IMR-90 (cell line): ENCODE measurements at regions of chr2 and their contacts with region 1.

Region 1: GRCh38 chr2:134027980-134028379 is 225.9 kb upstream of the MGAT5 start:
- DNase-seq: no peak
- ATAC-seq: no peak
- H3K4me3 ChIP-seq: no peak overlapping the region
- H3K27ac ChIP-seq: no peak overlapping the region
- H3K4me1 ChIP-seq: peaks cover 3% of the 10 kb centered on the region; the same call in 1 of the 2 replicates
- H3K27me3 ChIP-seq: peaks cover 9% of the 10 kb centered on the region
- CTCF ChIP-seq: no peak
- POLR2A ChIP-seq: no peak
- RAD21 ChIP-seq: no peak

Region 2: GRCh38 chr2:134098321-134098720 is 70.3 kb after region 1 on chr2:
- CTCF ChIA-PET with region 1: no interaction called
- POLR2A ChIA-PET with region 1: no interaction called
- dilution Hi-C with region 1: no loop called
- in situ Hi-C with region 1: no loop called
- intact Hi-C with region 1: loop called (anchors 5 kb)
- DNase-seq: no peak
- ATAC-seq: no peak; the same call in 1 of the 2 replicates
- H3K4me3 ChIP-seq: no peak overlapping the region
- H3K27ac ChIP-seq: no peak overlapping the region
- H3K4me1 ChIP-seq: no peaks in the 10 kb centered on the region; the same call in 1 of the 2 replicates
- H3K27me3 ChIP-seq: no peaks in the 10 kb centered on the region
- CTCF ChIP-seq: no peak
- POLR2A ChIP-seq: no peak
- RAD21 ChIP-seq: no peak

Region 3: GRCh38 chr2:134118279-134119116 is 90.5 kb after region 1 on chr2:
- CTCF ChIA-PET with region 1: no interaction called
- POLR2A ChIA-PET with region 1: no interaction called
- dilution Hi-C with region 1: no loop called
- in situ Hi-C with region 1: no loop called
- intact Hi-C with region 1: no loop called
- DNase-seq: peak; percentile 98
- ATAC-seq: peak; percentile 48
- H3K4me3 ChIP-seq: no peak overlapping the region
- H3K27ac ChIP-seq: peak overlapping the region; percentile 77; the same call in 1 of the 2 replicates
- H3K4me1 ChIP-seq: peaks cover 18% of the 10 kb centered on the region
- H3K27me3 ChIP-seq: no peaks in the 10 kb centered on the region
- CTCF ChIP-seq: peak; percentile 95
- POLR2A ChIP-seq: no peak
- RAD21 ChIP-seq: peak; percentile 98